Left ventricle myocardium inferior (tissue), 1 donor: ENCODE measurements at regions of chr5 and their contacts with region 1.

Region 1: DNA sequence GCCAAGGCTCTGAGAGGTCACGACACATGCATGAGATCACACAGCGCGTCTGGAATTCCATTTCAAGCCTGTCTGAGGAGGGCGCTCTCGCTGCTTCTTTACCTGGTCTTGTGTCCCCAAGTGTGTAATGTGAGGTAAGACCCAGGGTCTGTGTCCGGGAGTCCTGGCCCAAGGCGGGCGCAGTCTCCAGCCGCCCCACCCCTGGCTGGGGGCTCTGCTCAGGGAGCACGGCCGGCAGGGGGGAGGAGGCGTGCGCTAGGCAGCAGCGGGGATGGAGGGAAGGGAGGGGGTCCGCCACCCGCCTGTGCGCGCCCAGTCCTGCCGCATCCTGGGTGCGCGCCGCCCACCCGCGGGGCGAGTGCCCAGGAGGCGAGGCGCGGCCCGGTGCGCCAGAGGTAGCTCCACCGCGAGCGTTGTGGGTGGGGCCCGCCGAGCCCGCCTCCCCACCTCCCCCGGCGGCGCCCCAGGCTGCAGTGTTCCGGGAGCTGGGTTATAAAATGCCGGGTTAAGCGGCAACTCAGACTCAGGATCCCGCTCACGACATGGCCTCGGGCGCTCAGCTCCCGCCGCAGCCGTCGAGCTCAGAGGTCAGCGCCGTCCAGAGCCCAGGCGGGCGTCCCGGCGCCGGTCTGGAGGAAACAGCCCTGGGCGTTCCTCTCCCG is at the start of gene CCNI2:
- DNase-seq: no peak
- H3K4me3 ChIP-seq: peak within 1 kb of the TSS; percentile 68
- H3K27ac ChIP-seq: no peak within 1 kb of the TSS
- H3K4me1 ChIP-seq: peaks cover 13% of the 10 kb centered on the region
- H3K27me3 ChIP-seq: peaks cover 43% of the 10 kb centered on the region
- CTCF ChIP-seq: peak; percentile 24
- total RNA-seq, gene CCNI2: 0.08 TPM

Region 2: GRCh38 chr5:132456296-132457001 is 290.6 kb before region 1 on chr5:
- intact Hi-C with region 1: no loop called
- DNase-seq: peak; percentile 56
- H3K4me3 ChIP-seq: no peak overlapping the region
- H3K27ac ChIP-seq: peak overlapping the region; percentile 77
- H3K4me1 ChIP-seq: peaks cover 73% of the 10 kb centered on the region
- H3K27me3 ChIP-seq: no peaks in the 10 kb centered on the region
- CTCF ChIP-seq: no peak

Region 3: GRCh38 chr5:132813599-132814502 is 66.8 kb after region 1 on chr5:
- intact Hi-C with region 1: loop called (anchors 10 kb)
- DNase-seq: no peak
- H3K4me3 ChIP-seq: peak overlapping the region; percentile 66
- H3K27ac ChIP-seq: no peak overlapping the region
- H3K4me1 ChIP-seq: peaks cover 19% of the 10 kb centered on the region
- H3K27me3 ChIP-seq: peaks cover 59% of the 10 kb centered on the region
- CTCF ChIP-seq: peak; percentile 16